GM12878 (cell line): ENCODE measurements at regions of chr10 and their contacts with region 1.

Region 1: GRCh38 chr10:93859049-93859655 is 34.6 kb upstream of the SLC35G1 start:
- DNase-seq: no peak
- ATAC-seq: peak; percentile 46; the same call in 1 of the 3 replicates
- H3K4me3 ChIP-seq: no peak overlapping the region
- H3K27ac ChIP-seq: no peak overlapping the region
- H3K4me1 ChIP-seq: no peaks in the 10 kb centered on the region
- H3K27me3 ChIP-seq: no peaks in the 10 kb centered on the region
- CTCF ChIP-seq: peak; percentile 20 to 49 (median 36); a peak in 4 of 6 replicates
- EP300 ChIP-seq: no peak
- POLR2A ChIP-seq: no peak
- RAD21 ChIP-seq: peak; percentile 58

Region 2: DNA sequence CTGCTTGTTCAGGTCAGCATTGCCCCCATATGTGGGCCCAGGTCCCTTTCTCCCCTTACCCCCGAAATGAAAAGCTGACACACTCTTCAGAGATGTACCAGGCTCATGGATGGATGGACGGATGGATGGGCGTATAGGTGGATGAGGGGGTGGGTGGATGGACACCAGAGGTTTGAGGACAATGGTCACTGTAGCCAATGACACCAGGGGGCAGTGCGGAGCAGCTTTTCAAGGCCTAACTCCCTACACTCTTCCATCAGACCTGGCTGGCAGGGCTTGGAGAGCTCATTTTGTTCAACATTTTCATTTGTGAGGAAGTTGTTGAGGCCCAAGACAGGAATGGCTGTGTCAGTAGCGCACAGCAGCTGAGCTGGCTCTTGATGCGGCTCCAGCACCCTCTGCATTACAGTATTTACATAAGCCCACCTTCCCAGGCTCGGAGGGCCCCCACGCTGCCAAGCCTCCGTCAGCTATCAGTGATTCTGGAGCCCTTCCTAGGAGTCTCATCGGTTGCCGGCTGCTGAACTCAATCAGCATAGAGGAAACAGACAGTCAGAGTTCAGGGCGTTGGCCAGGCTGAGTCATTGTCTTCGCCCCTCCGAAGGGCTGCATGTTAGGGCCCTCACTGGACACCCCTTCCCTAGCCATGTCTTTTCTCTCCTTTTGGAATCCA is 304.3 kb before region 1 on chr10:
- CTCF ChIA-PET with region 1: interaction called, 28 read pairs
- POLR2A ChIA-PET with region 1: no interaction called
- RAD21 ChIA-PET with region 1: interaction called, 3 read pairs
- SMC1A ChIA-PET with region 1: interaction called, 9 read pairs
- in situ Hi-C with region 1: no loop called
- intact Hi-C with region 1: loop called (anchors 1 kb)
- DNase-seq: no peak
- ATAC-seq: peak; percentile 99
- H3K4me3 ChIP-seq: no peak overlapping the region
- H3K27ac ChIP-seq: no peak overlapping the region
- H3K4me1 ChIP-seq: no peaks in the 10 kb centered on the region
- H3K27me3 ChIP-seq: no peaks in the 10 kb centered on the region
- CTCF ChIP-seq: peak; percentile 77 to 83 (median 82)
- EP300 ChIP-seq: no peak
- POLR2A ChIP-seq: no peak
- RAD21 ChIP-seq: peak; percentile 57

Region 3: DNA sequence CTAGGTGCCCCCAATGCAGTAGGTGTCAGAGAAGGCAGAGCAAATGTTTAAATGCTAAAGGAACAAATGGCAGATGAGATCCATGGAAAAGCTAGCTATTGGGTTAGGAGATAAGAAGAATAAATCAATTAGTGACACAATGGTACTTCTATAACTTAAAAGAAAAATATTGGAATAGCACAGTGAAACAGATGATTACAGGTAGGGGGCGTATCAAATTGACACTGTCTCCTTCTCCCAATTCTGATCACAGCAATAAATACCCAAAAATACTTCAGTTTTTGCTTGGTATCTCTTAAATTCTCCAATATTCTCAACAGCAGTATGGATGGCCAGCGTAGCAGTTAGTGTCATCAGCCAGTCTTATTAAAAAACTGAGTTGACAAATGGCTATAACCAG is 161.9 kb before region 1 on chr10:
- CTCF ChIA-PET with region 1: interaction called, 5 read pairs
- POLR2A ChIA-PET with region 1: no interaction called
- RAD21 ChIA-PET with region 1: interaction called, 6 read pairs
- SMC1A ChIA-PET with region 1: interaction called, 4 read pairs
- in situ Hi-C with region 1: no loop called
- intact Hi-C with region 1: loop called (anchors 5 kb)
- DNase-seq: no peak
- ATAC-seq: no peak
- H3K4me3 ChIP-seq: no peak overlapping the region
- H3K27ac ChIP-seq: no peak overlapping the region
- H3K4me1 ChIP-seq: no peaks in the 10 kb centered on the region
- H3K27me3 ChIP-seq: no peaks in the 10 kb centered on the region
- CTCF ChIP-seq: peak in 1 of 3 experiments; percentile 15; a peak in 2 of 6 replicates
- EP300 ChIP-seq: no peak
- POLR2A ChIP-seq: no peak
- RAD21 ChIP-seq: no peak

Region 4: GRCh38 chr10:93876381-93876780 is 17.2 kb after region 1 on chr10:
- CTCF ChIA-PET with region 1: interaction called, 11 read pairs
- POLR2A ChIA-PET with region 1: no interaction called
- RAD21 ChIA-PET with region 1: interaction called, 3 read pairs
- SMC1A ChIA-PET with region 1: interaction called, 3 read pairs
- in situ Hi-C with region 1: no loop called
- intact Hi-C with region 1: no loop called
- DNase-seq: no peak
- ATAC-seq: no peak
- H3K4me3 ChIP-seq: no peak overlapping the region
- H3K27ac ChIP-seq: no peak overlapping the region
- H3K4me1 ChIP-seq: no peaks in the 10 kb centered on the region
- H3K27me3 ChIP-seq: no peaks in the 10 kb centered on the region; a peak in 1 of 4 replicates
- CTCF ChIP-seq: no peak
- EP300 ChIP-seq: no peak
- POLR2A ChIP-seq: no peak
- RAD21 ChIP-seq: no peak